MCF 10A (cell line): ENCODE measurements at regions of chr1 and their contacts with region 1.

Region 1: GRCh38 chr1:233319272-233319671 is 8.3 kb upstream of the MAP3K21 start:
- DNase-seq: no peak
- H3K4me3 Mint-ChIP-seq: no peak overlapping the region
- H3K27ac Mint-ChIP-seq: no peak overlapping the region
- H3K4me1 Mint-ChIP-seq: no peaks in the 10 kb centered on the region
- H3K27me3 Mint-ChIP-seq: peaks cover 29% of the 10 kb centered on the region
- CTCF ChIP-seq: no peak

Region 2: GRCh38 chr1:233295237-233295974 is 23.9 kb before region 1 on chr1 and contains the start of gene PCNX2:
- CTCF ChIA-PET with region 1: interaction called, 6 read pairs
- POLR2A ChIA-PET with region 1: interaction called, 10 read pairs
- intact Hi-C with region 1: no loop called
- DNase-seq: peak; percentile 88
- H3K4me3 Mint-ChIP-seq: peak within 1 kb of the TSS; percentile 81
- H3K27ac Mint-ChIP-seq: peak within 1 kb of the TSS; percentile 68
- H3K4me1 Mint-ChIP-seq: peaks cover 28% of the 10 kb centered on the region
- H3K27me3 Mint-ChIP-seq: no peaks in the 10 kb centered on the region
- CTCF ChIP-seq: no peak
- total RNA-seq, gene PCNX2: 80.5 and 85.3 TPM in 2 replicates